ENCODE measurements at regions of chr2 and their contacts with region 1.

Region 1: GRCh38 chr2:232550354-232551249 is at the starts of genes EIF4E2 and TIGD1:
- DNase-seq: peak; percentile 95
- ATAC-seq: peak; percentile 98
- H3K4me3 ChIP-seq: peak within 1 kb of the TSS; percentile 73 to 85 (median 85)
- H3K27ac ChIP-seq: peak within 1 kb of the TSS; percentile 95
- H3K4me1 ChIP-seq: peaks cover 58% of the 10 kb centered on the region
- H3K27me3 ChIP-seq: no peaks in the 10 kb centered on the region; a peak in 1 of 5 replicates
- CTCF ChIP-seq: peak; percentile 53; the same call in 1 of the 2 replicates
- EP300 ChIP-seq: peak; percentile 60 to 64
- POLR2A ChIP-seq: peak; percentile 97 to 98
- RAD21 ChIP-seq: peak; percentile 62; the same call in 1 of the 2 replicates
- total RNA-seq, gene EIF4E2: 101 and 128 TPM in 2 replicates
- total RNA-seq, gene TIGD1: 4.3 and 9.5 TPM in 2 replicates

Region 2: GRCh38 chr2:231786177-231786916 is 764.3 kb before region 1 on chr2 and contains the start of gene COPS7B:
- CTCF ChIA-PET with region 1: no interaction called
- POLR2A ChIA-PET with region 1: interaction called, 3 read pairs
- in situ Hi-C with region 1: no loop called
- intact Hi-C with region 1: loop called (anchors 5 kb)
- DNase-seq: peak; percentile 84
- ATAC-seq: peak; percentile 84
- H3K4me3 ChIP-seq: peak within 1 kb of the TSS; percentile 84 to 96 (median 94)
- H3K27ac ChIP-seq: peak within 1 kb of the TSS; percentile 76
- H3K4me1 ChIP-seq: peaks cover 68% of the 10 kb centered on the region
- H3K27me3 ChIP-seq: no peaks in the 10 kb centered on the region; a peak in 1 of 5 replicates
- CTCF ChIP-seq: peak; percentile 85
- EP300 ChIP-seq: peak; percentile 35 to 72; a peak in 2 of 4 replicates
- POLR2A ChIP-seq: peak; percentile 64 to 80
- RAD21 ChIP-seq: peak; percentile 76
- total RNA-seq, gene COPS7B: 29.6 and 30.6 TPM in 2 replicates

Region 3: DNA sequence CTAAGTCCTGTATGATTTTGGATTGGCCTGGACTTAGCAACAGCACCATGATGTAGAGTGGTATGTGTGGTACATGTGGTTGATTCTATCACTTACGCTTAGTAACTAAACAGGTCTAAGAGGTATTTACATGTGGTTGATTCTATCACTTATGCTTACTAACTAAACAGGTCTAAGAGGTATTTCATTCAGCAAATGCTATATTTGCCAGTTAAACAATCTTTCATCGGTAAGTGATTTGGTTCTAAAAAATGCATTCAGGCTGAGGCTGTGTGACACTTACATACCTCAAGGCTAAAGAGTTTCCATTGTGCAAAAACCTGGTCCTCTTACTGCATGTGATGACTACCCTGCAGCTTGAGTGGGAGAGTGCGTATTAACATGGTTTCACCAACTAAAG is 13.0 kb after region 1 on chr2:
- CTCF ChIA-PET with region 1: no interaction called
- POLR2A ChIA-PET with region 1: interaction called, 10 read pairs
- in situ Hi-C with region 1: no loop called
- intact Hi-C with region 1: no loop called
- DNase-seq: no peak
- ATAC-seq: no peak
- H3K4me3 ChIP-seq: no peak overlapping the region
- H3K27ac ChIP-seq: no peak overlapping the region
- H3K4me1 ChIP-seq: no peaks in the 10 kb centered on the region
- H3K27me3 ChIP-seq: no peaks in the 10 kb centered on the region
- CTCF ChIP-seq: no peak
- EP300 ChIP-seq: no peak
- POLR2A ChIP-seq: no peak
- RAD21 ChIP-seq: no peak

Region 4: GRCh38 chr2:232574674-232575403 is 24.2 kb after region 1 on chr2:
- CTCF ChIA-PET with region 1: no interaction called
- POLR2A ChIA-PET with region 1: interaction called, 11 read pairs
- in situ Hi-C with region 1: no loop called
- intact Hi-C with region 1: loop called (anchors 1 kb)
- DNase-seq: peak; percentile 90
- ATAC-seq: peak; percentile 98
- H3K4me3 ChIP-seq: peak overlapping the region in 1 of 3 experiments; percentile 15; a peak in 1 of 6 replicates
- H3K27ac ChIP-seq: peak overlapping the region; percentile 82
- H3K4me1 ChIP-seq: peaks cover 50% of the 10 kb centered on the region
- H3K27me3 ChIP-seq: no peaks in the 10 kb centered on the region
- CTCF ChIP-seq: no peak
- EP300 ChIP-seq: peak in 1 of 2 experiments; percentile 57; a peak in 1 of 4 replicates
- POLR2A ChIP-seq: peak; percentile 17 to 64; a peak in 2 of 4 replicates
- RAD21 ChIP-seq: no peak; the same call in 1 of the 2 replicates

Region 5: GRCh38 chr2:232731470-232731869 is 180.9 kb after region 1 on chr2:
- CTCF ChIA-PET with region 1: no interaction called
- POLR2A ChIA-PET with region 1: no interaction called
- in situ Hi-C with region 1: no loop called
- intact Hi-C with region 1: no loop called
- DNase-seq: no peak
- ATAC-seq: no peak
- H3K4me3 ChIP-seq: no peak overlapping the region
- H3K27ac ChIP-seq: no peak overlapping the region
- H3K4me1 ChIP-seq: no peaks in the 10 kb centered on the region
- H3K27me3 ChIP-seq: no peaks in the 10 kb centered on the region
- CTCF ChIP-seq: no peak
- EP300 ChIP-seq: no peak
- POLR2A ChIP-seq: no peak
- RAD21 ChIP-seq: no peak